ENCODE measurements at regions of chr14 and their contacts with region 1.

Region 1: DNA sequence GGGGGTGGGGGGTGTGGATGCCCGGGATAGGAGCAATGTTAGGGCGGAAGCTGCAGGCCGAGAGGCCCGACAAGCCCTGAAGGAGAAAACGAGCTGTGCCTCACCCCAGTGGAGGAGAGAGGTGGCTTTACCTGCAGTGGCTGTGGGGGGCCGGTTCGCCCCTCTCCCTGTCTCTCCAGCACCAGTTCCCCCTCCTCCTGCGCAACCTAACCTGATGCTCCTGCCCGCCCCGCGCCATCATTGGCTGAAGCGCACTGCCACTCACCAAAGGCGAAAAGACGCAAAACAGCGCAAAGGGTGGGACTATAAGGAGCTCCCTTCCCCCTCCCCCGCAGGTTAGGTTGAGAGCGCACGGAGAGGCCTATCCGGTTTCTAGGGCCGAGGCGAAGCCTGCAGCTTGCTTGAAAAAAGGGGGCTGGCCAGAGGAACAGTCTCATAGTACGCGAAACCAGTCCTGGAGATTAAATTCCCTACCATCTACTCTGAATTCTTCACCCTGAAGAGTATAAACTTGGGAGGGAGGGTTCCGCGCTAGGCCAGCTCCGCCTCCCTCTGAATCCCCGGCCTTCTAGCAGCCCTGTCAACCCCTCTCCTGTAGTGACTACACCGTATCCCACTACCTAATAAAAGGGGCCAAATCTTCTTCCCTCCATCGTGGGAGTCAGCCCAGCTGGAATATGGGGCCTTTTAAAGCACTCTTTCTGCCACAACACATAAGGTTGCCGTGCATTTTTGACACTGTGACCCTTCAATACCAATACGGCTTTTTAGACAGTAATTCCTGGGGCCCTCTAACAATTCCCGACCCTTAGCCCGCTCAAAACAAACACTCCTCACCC is 18.6 kb downstream of the CHD8 start:
- DNase-seq: peak; percentile 98 to 99
- ATAC-seq: peak; percentile 98 to 100 (median 99)
- H3K4me3 ChIP-seq: peak overlapping the region; percentile 89
- H3K4me3 Mint-ChIP-seq: peak overlapping the region; percentile 89
- H3K27ac ChIP-seq: peak overlapping the region; percentile 95
- H3K27ac Mint-ChIP-seq: peak overlapping the region; percentile 86 to 96
- H3K4me1 ChIP-seq: peaks cover 9% of the 10 kb centered on the region
- H3K4me1 Mint-ChIP-seq: peaks cover 40 to 62% of the 10 kb centered on the region in 2 donors
- H3K27me3 ChIP-seq: no peaks in the 10 kb centered on the region
- H3K27me3 Mint-ChIP-seq: no peaks in the 10 kb centered on the region
- CTCF ChIP-seq: no peak

Region 2: GRCh38 chr14:21269252-21270046 is 167.8 kb before region 1 on chr14 and contains the start of gene HNRNPC:
- intact Hi-C with region 1: loop called (anchors 2 kb)
- DNase-seq: peak; percentile 100
- ATAC-seq: peak; percentile 79 to 94 (median 88)
- H3K4me3 ChIP-seq: peak within 1 kb of the TSS; percentile 81
- H3K4me3 Mint-ChIP-seq: peak within 1 kb of the TSS; percentile 93
- H3K27ac ChIP-seq: peak within 1 kb of the TSS; percentile 97
- H3K27ac Mint-ChIP-seq: peak within 1 kb of the TSS; percentile 96 to 97
- H3K4me1 ChIP-seq: peaks cover 29% of the 10 kb centered on the region
- H3K4me1 Mint-ChIP-seq: peaks cover 38 to 51% of the 10 kb centered on the region in 2 donors
- H3K27me3 ChIP-seq: no peaks in the 10 kb centered on the region
- H3K27me3 Mint-ChIP-seq: no peaks in the 10 kb centered on the region
- CTCF ChIP-seq: no peak
- total RNA-seq, gene HNRNPC: 501 to 547 (median 515) TPM

Region 3: GRCh38 chr14:21383848-21384493 is 53.3 kb before region 1 on chr14 and contains the start of gene SUPT16H:
- intact Hi-C with region 1: loop called (anchors 1 kb)
- DNase-seq: peak; percentile 89 to 96
- ATAC-seq: peak; percentile 89 to 98 (median 93)
- H3K4me3 ChIP-seq: peak within 1 kb of the TSS; percentile 96
- H3K4me3 Mint-ChIP-seq: peak within 1 kb of the TSS; percentile 98
- H3K27ac ChIP-seq: peak within 1 kb of the TSS; percentile 93
- H3K27ac Mint-ChIP-seq: peak within 1 kb of the TSS; percentile 96 to 99
- H3K4me1 ChIP-seq: peaks cover 17% of the 10 kb centered on the region
- H3K4me1 Mint-ChIP-seq: peaks cover 33% of the 10 kb centered on the region in 2 donors
- H3K27me3 ChIP-seq: no peaks in the 10 kb centered on the region
- H3K27me3 Mint-ChIP-seq: no peaks in the 10 kb centered on the region
- CTCF ChIP-seq: no peak
- total RNA-seq, gene SUPT16H: 60.3 to 72.6 (median 65.1) TPM

Region 4: GRCh38 chr14:21455911-21456667 is 18.8 kb after region 1 on chr14 and contains the start of gene CHD8:
- intact Hi-C with region 1: loop called (anchors 1 kb)
- DNase-seq: peak; percentile 96 to 100
- ATAC-seq: peak; percentile 95 to 100 (median 96)
- H3K4me3 ChIP-seq: peak within 1 kb of the TSS; percentile 86
- H3K4me3 Mint-ChIP-seq: peak within 1 kb of the TSS; percentile 97
- H3K27ac ChIP-seq: peak within 1 kb of the TSS; percentile 96
- H3K27ac Mint-ChIP-seq: peak within 1 kb of the TSS; percentile 98
- H3K4me1 ChIP-seq: peaks cover 18% of the 10 kb centered on the region
- H3K4me1 Mint-ChIP-seq: peaks cover 36 to 45% of the 10 kb centered on the region in 2 donors
- H3K27me3 ChIP-seq: no peaks in the 10 kb centered on the region
- H3K27me3 Mint-ChIP-seq: no peaks in the 10 kb centered on the region
- CTCF ChIP-seq: peak; percentile 61
- total RNA-seq, gene CHD8: 150 to 167 (median 162) TPM

Region 5: GRCh38 chr14:21476925-21477681 is 39.8 kb after region 1 on chr14 and contains the starts of genes RAB2B and TOX4:
- intact Hi-C with region 1: loop called (anchors 1 kb)
- DNase-seq: peak; percentile 92 to 99
- ATAC-seq: peak; percentile 94 to 100 (median 96)
- H3K4me3 ChIP-seq: peak within 1 kb of the TSS; percentile 80
- H3K4me3 Mint-ChIP-seq: peak within 1 kb of the TSS; percentile 98
- H3K27ac ChIP-seq: peak within 1 kb of the TSS; percentile 88
- H3K27ac Mint-ChIP-seq: peak within 1 kb of the TSS; percentile 96 to 97
- H3K4me1 ChIP-seq: peaks cover 9% of the 10 kb centered on the region
- H3K4me1 Mint-ChIP-seq: peaks cover 34 to 43% of the 10 kb centered on the region in 2 donors
- H3K27me3 ChIP-seq: no peaks in the 10 kb centered on the region
- H3K27me3 Mint-ChIP-seq: no peaks in the 10 kb centered on the region
- CTCF ChIP-seq: peak; percentile 88
- total RNA-seq, gene RAB2B: 43.3 to 64.7 (median 50.9) TPM
- total RNA-seq, gene TOX4: 103 to 123 (median 123) TPM

Region 6: GRCh38 chr14:21510735-21511657 is 73.7 kb after region 1 on chr14 and contains the start of gene METTL3:
- intact Hi-C with region 1: loop called (anchors 1 kb)
- DNase-seq: peak; percentile 91 to 98
- ATAC-seq: peak; percentile 98 to 100 (median 99)
- H3K4me3 ChIP-seq: peak within 1 kb of the TSS; percentile 82
- H3K4me3 Mint-ChIP-seq: peak within 1 kb of the TSS; percentile 97
- H3K27ac ChIP-seq: peak within 1 kb of the TSS; percentile 73
- H3K27ac Mint-ChIP-seq: peak within 1 kb of the TSS; percentile 96 to 98
- H3K4me1 ChIP-seq: peaks cover 17% of the 10 kb centered on the region
- H3K4me1 Mint-ChIP-seq: peaks cover 35 to 40% of the 10 kb centered on the region in 2 donors
- H3K27me3 ChIP-seq: no peaks in the 10 kb centered on the region
- H3K27me3 Mint-ChIP-seq: no peaks in the 10 kb centered on the region
- CTCF ChIP-seq: no peak
- total RNA-seq, gene METTL3: 63.3 to 72.5 (median 68.3) TPM

Region 7: DNA sequence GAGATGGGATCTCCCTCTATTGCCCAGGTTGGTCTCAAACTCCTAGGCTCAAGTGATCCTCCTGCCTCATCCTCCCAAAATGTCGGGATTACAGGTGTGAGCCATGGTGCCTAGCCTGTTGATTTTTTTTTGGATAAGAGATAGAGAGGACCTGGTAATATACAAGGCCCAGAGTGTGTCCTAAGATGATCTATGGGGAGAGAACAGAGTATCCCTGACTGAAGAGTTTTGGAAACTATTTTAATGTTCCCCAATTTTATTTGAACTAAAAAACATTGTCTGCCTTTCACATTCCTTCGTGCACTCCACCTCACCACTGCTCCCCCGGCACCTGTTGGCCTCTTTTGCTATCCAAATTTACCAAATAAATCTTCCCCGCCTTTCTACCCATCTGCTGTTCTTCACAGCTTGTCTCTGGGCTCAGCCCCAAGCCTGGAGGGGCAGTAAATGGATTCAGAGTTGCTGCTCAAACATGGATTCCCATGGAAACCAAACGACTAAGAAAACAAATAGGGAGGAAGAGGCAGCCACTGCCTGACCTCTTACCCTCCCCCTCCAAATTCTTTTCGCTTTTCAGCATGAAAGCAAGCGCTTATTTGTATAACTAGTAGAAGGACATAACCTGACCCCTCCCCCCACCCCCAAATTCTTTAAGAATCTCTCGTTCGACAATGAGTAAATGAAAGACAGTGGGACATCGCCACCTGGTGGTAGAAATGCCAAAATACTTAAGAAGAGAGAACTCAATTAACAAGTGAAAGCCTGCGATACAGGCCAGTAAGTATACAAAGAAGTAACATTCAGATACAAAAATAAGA is 120.0 kb after region 1 on chr14:
- intact Hi-C with region 1: loop called (anchors 2 kb)
- DNase-seq: peak; percentile 48 to 92
- ATAC-seq: peak; percentile 72 to 80 (median 78)
- H3K4me3 ChIP-seq: no peak overlapping the region
- H3K4me3 Mint-ChIP-seq: peak overlapping the region; percentile 45
- H3K27ac ChIP-seq: no peak overlapping the region
- H3K27ac Mint-ChIP-seq: peak overlapping the region in 1 of 2 donors; percentile 58
- H3K4me1 ChIP-seq: peaks cover 5% of the 10 kb centered on the region
- H3K4me1 Mint-ChIP-seq: peaks cover 6% of the 10 kb centered on the region in 2 donors
- H3K27me3 ChIP-seq: no peaks in the 10 kb centered on the region
- H3K27me3 Mint-ChIP-seq: no peaks in the 10 kb centered on the region
- CTCF ChIP-seq: peak; percentile 75

Region 8: GRCh38 chr14:21572604-21573003 is 135.3 kb after region 1 on chr14:
- intact Hi-C with region 1: no loop called
- DNase-seq: no peak
- ATAC-seq: no peak
- H3K4me3 ChIP-seq: no peak overlapping the region
- H3K4me3 Mint-ChIP-seq: no peak overlapping the region
- H3K27ac ChIP-seq: no peak overlapping the region
- H3K27ac Mint-ChIP-seq: no peak overlapping the region
- H3K4me1 ChIP-seq: no peaks in the 10 kb centered on the region
- H3K4me1 Mint-ChIP-seq: no peaks in the 10 kb centered on the region
- H3K27me3 ChIP-seq: no peaks in the 10 kb centered on the region
- H3K27me3 Mint-ChIP-seq: peaks cover 23 to 26% of the 10 kb centered on the region in 2 donors
- CTCF ChIP-seq: no peak